ENCODE measurements at regions of chr15 and their contacts with region 1.

Region 1: DNA sequence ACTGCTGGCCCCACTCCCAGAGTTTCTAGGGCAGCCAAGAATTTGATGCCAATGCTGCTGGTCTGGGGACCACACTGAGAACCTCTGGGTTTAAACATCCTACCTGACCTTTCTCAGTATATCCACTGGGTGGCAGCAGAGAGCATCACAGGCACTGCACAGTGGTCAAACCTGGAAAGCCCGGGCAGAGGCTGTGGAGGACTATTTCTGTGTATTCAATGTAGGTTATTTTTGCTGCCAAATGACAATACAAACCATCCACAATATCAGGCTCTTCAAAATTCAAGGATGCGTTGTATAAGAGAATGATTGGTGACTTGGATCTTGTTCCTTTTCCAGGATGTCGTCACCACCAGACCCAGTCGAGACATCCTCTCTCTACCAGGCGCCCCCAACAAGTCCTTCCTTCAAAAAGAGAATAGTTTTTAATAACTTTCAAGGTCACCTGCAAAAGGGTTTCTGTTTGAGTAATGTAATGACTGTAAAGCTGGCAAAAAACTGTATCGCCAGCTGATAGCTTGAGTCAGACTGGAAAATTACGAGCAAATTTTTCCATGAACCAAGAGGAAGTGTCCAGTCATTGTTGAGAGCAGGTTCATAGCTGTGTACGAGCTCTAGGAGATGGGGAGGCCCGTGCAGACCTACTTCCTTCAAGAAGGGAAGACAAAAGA is 30.5 kb upstream of the MYZAP start:
- H3K4me3 Mint-ChIP-seq: peak overlapping the region; percentile 32
- H3K27ac Mint-ChIP-seq: peak overlapping the region; percentile 86
- H3K4me1 Mint-ChIP-seq: peaks cover 37% of the 10 kb centered on the region
- H3K27me3 Mint-ChIP-seq: peaks cover 27% of the 10 kb centered on the region

Region 2: DNA sequence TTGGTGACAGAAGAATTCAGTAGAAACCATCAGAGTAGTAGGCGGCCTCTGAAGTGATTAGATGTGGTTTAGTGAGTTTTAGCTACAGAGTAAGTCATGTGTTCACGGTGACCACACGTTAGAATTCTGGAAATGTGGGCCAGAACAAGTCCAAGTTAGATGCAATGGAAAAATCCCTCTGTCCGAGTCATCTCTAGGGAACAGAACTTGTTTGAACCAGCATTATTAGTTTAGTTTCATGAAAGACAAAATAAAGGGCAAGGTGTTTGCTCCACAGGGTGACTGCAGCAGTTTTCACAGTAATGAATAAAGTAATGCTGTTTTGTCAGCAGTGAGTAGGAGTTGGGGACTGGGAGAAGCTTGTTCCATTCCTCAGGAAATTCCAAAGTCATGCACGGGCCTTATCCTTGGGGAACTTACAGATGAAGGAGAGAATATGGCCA is 84.6 kb before region 1 on chr15:
- intact Hi-C with region 1: no loop called
- H3K4me3 Mint-ChIP-seq: no peak overlapping the region
- H3K27ac Mint-ChIP-seq: no peak overlapping the region
- H3K4me1 Mint-ChIP-seq: no peaks in the 10 kb centered on the region
- H3K27me3 Mint-ChIP-seq: peaks cover 7% of the 10 kb centered on the region

Region 3: DNA sequence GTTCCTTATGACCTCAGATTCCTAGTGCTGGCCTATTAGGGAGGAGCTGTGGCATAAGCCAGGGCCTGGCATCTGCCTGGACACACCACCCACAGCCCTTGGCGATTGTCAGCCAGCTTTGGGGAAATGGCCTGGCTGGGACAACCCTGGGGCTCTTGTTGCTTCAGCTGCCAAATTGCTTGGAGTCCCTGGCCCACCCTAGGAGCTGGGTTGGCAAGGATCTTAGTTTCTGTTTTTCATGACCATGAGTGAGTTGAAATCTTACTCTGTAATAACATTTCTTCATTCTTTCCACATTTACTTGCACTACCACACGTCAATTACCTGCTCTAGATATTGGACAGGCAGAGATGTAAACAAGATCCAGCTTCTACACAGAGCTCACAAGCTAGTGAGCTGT is 28.6 kb after region 1 on chr15:
- intact Hi-C with region 1: loop called (anchors 2 kb)
- H3K4me3 Mint-ChIP-seq: no peak overlapping the region
- H3K27ac Mint-ChIP-seq: peak overlapping the region; percentile 98
- H3K4me1 Mint-ChIP-seq: peaks cover 87% of the 10 kb centered on the region
- H3K27me3 Mint-ChIP-seq: peaks cover 19% of the 10 kb centered on the region

Region 4: GRCh38 chr15:57635300-57635909 is 74.2 kb after region 1 on chr15:
- intact Hi-C with region 1: loop called (anchors 5 kb)
- H3K4me3 Mint-ChIP-seq: no peak overlapping the region
- H3K27ac Mint-ChIP-seq: no peak overlapping the region
- H3K4me1 Mint-ChIP-seq: no peaks in the 10 kb centered on the region
- H3K27me3 Mint-ChIP-seq: peaks cover 2% of the 10 kb centered on the region

Region 5: DNA sequence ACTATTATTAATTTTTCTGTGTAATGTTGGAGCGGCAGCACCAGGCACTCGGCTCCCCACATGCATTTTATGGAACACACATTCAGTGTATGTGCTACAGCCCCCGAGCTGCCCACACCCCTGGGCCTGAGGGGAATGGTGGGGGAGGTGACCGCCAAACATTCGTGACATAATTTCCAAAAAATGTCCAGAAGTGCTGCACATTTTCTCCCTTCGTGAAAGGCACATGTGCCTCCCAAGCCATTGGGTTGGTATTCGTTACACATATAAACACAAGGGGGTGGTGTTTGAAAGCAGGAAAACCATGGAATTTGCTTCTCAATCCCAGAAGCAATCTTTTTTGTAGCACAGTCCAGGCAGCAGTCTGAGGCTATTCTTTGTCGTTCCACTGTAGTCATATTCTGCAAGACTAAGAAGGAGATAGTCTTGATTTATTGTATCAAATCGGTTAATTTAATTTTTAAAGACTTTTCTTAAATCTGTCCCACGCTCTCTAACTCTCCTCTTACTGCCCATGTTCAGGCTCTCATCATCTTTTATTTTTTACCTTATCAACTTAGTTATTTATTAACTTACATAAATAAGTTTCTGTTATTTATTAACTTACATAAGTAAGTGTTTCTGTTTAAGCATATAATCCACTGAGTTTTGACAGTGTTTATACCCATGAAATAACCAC is 106.1 kb after region 1 on chr15:
- intact Hi-C with region 1: no loop called
- H3K4me3 Mint-ChIP-seq: no peak overlapping the region
- H3K27ac Mint-ChIP-seq: no peak overlapping the region
- H3K4me1 Mint-ChIP-seq: no peaks in the 10 kb centered on the region
- H3K27me3 Mint-ChIP-seq: peaks cover 7% of the 10 kb centered on the region

Region 6: GRCh38 chr15:57861036-57861638 is 300.0 kb after region 1 on chr15:
- intact Hi-C with region 1: loop called (anchors 2 kb)
- H3K4me3 Mint-ChIP-seq: no peak overlapping the region
- H3K27ac Mint-ChIP-seq: no peak overlapping the region
- H3K4me1 Mint-ChIP-seq: no peaks in the 10 kb centered on the region
- H3K27me3 Mint-ChIP-seq: peaks cover 25% of the 10 kb centered on the region

Region 7: DNA sequence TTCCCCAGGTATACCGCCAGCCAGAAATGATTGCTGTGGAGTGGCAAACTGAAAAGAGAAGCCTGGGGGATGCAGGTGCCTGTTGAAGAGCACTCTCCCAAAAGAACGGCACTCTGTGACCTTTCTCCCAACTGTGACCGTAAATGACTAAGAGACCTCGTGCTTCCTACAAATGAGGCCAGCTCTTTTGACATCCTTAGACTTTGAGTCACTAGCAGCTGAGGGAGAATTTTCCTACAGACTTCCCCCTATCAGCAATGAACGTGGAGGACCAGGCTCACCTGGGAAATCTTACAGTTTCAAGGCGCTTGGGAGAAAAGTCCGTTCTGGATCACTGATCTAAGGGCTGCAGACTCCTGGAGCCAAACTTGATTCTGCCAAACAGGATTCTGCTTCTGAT is 585.6 kb after region 1 on chr15:
- intact Hi-C with region 1: loop called (anchors 10 kb)
- H3K4me3 Mint-ChIP-seq: peak overlapping the region; percentile 44
- H3K27ac Mint-ChIP-seq: peak overlapping the region; percentile 88
- H3K4me1 Mint-ChIP-seq: peaks cover 66% of the 10 kb centered on the region
- H3K27me3 Mint-ChIP-seq: no peaks in the 10 kb centered on the region